Psoas muscle (tissue), 8 donors: ENCODE measurements at regions of chr6 and their contacts with region 1.

Region 1: DNA sequence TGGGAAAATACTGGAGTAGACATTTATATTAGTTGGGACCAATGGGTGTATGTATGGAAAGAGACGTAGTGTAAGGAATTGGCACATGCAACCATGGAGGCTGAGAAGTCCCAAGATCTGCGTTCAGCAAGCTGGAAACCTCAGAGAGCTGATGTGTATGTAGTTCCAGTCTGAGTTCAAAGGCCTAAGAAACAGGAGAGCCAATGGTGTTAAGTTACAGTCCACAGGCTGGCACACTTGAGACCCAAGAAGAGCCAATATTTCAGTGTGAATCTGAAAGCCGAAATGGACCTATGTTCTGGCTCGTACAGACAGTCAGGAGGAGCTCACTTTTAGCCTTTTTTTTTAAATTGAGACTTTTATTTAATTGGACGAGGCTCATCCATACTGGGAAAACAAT is 244.2 kb downstream of the CDKAL1 start:
- DNase-seq: no peak
- ATAC-seq: peak in 3 of 4 donors; percentile 84 to 92 (median 89)
- H3K4me3 ChIP-seq: peak overlapping the region; percentile 51
- H3K27ac ChIP-seq: peak overlapping the region; percentile 68
- H3K4me1 ChIP-seq: peaks cover 14% of the 10 kb centered on the region
- H3K27me3 ChIP-seq: no peaks in the 10 kb centered on the region
- CTCF ChIP-seq: no peak

Region 2: DNA sequence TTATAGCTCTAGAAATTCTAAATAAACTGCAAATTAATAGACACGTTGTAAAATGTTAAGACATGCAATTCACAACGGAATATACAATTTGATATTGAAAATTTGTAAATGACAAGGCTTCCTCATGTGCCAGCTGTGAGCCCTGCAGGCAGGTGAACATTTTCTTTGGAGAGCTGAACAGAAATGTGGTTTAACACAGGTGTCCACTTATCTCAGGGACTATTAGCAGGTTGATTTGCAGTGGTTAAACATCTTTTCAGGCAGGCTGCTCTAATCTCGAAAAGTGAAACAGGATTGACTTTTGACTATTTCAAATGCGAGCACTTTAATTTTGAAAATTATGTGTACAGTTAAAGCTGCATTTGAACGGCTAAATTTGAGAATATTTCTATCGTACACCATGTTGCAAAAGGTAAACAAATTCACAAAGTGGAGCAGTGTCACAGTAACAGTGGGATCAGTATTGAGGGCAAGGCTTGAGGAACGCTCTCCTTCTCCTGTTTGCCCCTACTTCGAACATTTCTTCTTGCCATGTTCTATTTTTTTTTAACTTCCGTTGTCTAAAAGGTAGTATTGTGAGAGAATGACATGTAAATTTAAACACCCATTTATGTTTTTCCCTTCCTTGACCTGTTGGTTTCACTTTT is 33.4 kb before region 1 on chr6:
- intact Hi-C with region 1: loop called in 1 of 2 experiments (anchors 5 kb)
- DNase-seq: no peak
- ATAC-seq: no peak
- H3K4me3 ChIP-seq: no peak overlapping the region
- H3K27ac ChIP-seq: no peak overlapping the region
- H3K4me1 ChIP-seq: peaks cover 21% of the 10 kb centered on the region
- H3K27me3 ChIP-seq: no peaks in the 10 kb centered on the region
- CTCF ChIP-seq: no peak